Stomach (tissue), 19 donors: ENCODE measurements at regions of chr10 and their contacts with region 1.

Region 1: DNA sequence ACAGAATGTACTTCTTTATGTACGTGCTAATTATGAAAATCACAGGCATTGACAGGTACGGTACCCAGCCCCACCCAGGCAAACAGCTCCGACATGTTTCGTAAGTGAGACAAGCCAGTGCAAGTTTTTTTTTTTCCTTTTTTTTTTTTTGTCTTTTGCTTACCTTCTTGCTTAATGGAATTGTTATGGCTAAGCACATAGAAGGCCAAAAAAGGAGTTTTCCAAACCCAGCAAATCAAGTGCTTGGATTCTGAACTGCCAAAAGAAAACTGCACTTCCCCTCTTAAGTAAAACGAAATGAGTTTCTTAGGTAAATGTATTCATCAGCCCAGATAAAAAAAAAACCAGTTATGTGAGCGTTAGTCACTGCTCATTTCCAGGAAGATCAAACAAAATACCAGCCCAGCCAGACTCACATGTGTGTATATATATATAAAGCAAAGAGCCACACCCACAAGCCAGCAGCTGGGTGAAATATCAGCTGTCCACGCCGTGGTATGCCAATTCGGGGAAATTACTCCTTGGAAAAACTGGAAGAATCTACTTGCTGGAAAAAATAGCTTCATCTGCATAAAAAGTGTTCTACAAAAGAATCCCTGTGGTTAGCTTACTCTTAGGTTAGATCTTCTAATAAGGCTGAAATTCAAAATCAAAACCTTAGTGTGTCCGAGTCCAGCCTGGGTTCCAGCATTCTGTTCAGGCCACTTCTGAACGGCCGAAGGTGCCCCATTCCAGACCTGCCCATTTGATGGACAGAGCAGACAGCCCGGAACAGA is 8.0 kb downstream of the KLF6 start:
- DNase-seq: peak; percentile 71 to 92
- H3K4me3 ChIP-seq: peak overlapping the region in 2 of 4 donors; percentile 21 to 69
- H3K27ac ChIP-seq: peak overlapping the region; percentile 75 to 100 (median 100)
- H3K4me1 ChIP-seq: peaks cover 53 to 82% (median 67%) of the 10 kb centered on the region in 4 donors
- H3K27me3 ChIP-seq: no peaks in the 10 kb centered on the region
- CTCF ChIP-seq: no peak
- EP300 ChIP-seq: no peak
- POLR2A ChIP-seq: no peak

Region 2: DNA sequence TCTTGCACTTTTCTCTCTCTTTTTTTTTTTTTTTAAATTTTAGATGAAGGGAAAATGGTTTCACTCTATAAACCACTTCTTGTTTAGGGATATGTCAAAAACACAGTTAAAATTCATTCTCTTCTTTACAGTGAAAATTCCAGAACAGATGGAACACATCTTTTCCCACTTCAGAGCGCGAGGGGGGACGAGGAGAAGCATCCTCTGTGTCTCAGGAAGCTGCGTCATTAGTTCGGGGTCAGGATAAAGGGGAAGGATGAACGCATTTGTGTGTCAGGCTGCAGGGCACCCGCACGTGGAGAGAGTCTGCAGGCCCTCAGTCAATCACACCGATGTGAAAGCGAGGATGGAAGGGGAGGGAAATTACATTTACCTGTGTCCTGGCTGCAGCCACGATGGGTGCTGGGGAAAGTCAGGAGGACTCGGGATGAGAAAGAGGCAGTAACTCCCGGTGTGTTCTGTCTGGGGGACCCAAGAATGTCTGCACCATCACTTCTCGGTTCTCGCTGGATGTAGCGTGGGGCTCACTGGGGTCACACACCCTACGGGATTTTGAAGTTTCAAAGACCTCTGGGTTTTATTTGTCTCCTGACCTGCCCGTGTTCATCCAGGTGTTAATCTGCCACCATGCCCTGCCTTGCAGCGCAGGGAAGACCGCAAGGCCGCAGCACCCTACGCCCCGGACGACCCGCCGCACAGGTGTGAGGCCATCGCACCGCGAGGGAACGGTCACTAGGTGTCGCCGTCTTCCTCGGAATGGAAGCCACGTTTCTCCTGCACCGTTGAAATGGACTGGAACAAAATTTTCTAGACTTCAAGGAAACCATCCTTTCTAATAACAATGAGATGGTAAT is 537.7 kb before region 1 on chr10:
- intact Hi-C with region 1: loop called (anchors 10 kb)
- DNase-seq: peak; percentile 75 to 89
- H3K4me3 ChIP-seq: no peak overlapping the region
- H3K27ac ChIP-seq: peak overlapping the region in 2 of 5 donors; percentile 37 to 47
- H3K4me1 ChIP-seq: peaks cover 0 to 9% (median 3%) of the 10 kb centered on the region in 4 donors
- H3K27me3 ChIP-seq: peaks cover 0 to 3% (median 0%) of the 10 kb centered on the region in 3 donors
- CTCF ChIP-seq: peak in 5 of 7 experiments; percentile 78 to 90 (median 84)
- EP300 ChIP-seq: no peak
- POLR2A ChIP-seq: no peak